T-cell (primary cell): ENCODE measurements at regions of chr21 and their contacts with region 1.

Region 1: GRCh38 chr21:24171736-24172135 is 1435.5 kb downstream of the MRPL39 start:
- DNase-seq: no peak
- ATAC-seq: no peak
- H3K4me3 ChIP-seq: no peak overlapping the region
- H3K4me3 Mint-ChIP-seq: no peak overlapping the region
- H3K27ac ChIP-seq: no peak overlapping the region
- H3K27ac Mint-ChIP-seq: no peak overlapping the region
- H3K4me1 ChIP-seq: no peaks in the 10 kb centered on the region
- H3K4me1 Mint-ChIP-seq: no peaks in the 10 kb centered on the region
- H3K27me3 ChIP-seq: no peaks in the 10 kb centered on the region
- H3K27me3 Mint-ChIP-seq: no peaks in the 10 kb centered on the region

Region 2: GRCh38 chr21:24153137-24153536 is 18.6 kb before region 1 on chr21:
- CTCF ChIA-PET with region 1: no interaction called
- POLR2A ChIA-PET with region 1: no interaction called
- DNase-seq: no peak
- ATAC-seq: no peak
- H3K4me3 ChIP-seq: no peak overlapping the region
- H3K4me3 Mint-ChIP-seq: no peak overlapping the region
- H3K27ac ChIP-seq: no peak overlapping the region
- H3K27ac Mint-ChIP-seq: no peak overlapping the region
- H3K4me1 ChIP-seq: no peaks in the 10 kb centered on the region
- H3K4me1 Mint-ChIP-seq: no peaks in the 10 kb centered on the region
- H3K27me3 ChIP-seq: no peaks in the 10 kb centered on the region
- H3K27me3 Mint-ChIP-seq: no peaks in the 10 kb centered on the region

Region 3: GRCh38 chr21:25845729-25846256 is 1674.1 kb after region 1 on chr21:
- CTCF ChIA-PET with region 1: no interaction called
- POLR2A ChIA-PET with region 1: interaction called in 1 of 2 experiments, 11 read pairs
- DNase-seq: no peak
- ATAC-seq: no peak
- H3K4me3 ChIP-seq: no peak overlapping the region
- H3K4me3 Mint-ChIP-seq: no peak overlapping the region
- H3K27ac ChIP-seq: no peak overlapping the region
- H3K27ac Mint-ChIP-seq: no peak overlapping the region
- H3K4me1 ChIP-seq: no peaks in the 10 kb centered on the region
- H3K4me1 Mint-ChIP-seq: no peaks in the 10 kb centered on the region
- H3K27me3 ChIP-seq: peaks cover 0 to 2% of the 10 kb centered on the region in 2 experiments
- H3K27me3 Mint-ChIP-seq: peaks cover 0 to 9% of the 10 kb centered on the region in 2 donors